Activated CD4-positive, alpha-beta T cell treated with anti-CD3 and anti-CD28 coated beads for 36 hours (primary cell): ENCODE measurements at regions of chr12 and their contacts with region 1.

Region 1: DNA sequence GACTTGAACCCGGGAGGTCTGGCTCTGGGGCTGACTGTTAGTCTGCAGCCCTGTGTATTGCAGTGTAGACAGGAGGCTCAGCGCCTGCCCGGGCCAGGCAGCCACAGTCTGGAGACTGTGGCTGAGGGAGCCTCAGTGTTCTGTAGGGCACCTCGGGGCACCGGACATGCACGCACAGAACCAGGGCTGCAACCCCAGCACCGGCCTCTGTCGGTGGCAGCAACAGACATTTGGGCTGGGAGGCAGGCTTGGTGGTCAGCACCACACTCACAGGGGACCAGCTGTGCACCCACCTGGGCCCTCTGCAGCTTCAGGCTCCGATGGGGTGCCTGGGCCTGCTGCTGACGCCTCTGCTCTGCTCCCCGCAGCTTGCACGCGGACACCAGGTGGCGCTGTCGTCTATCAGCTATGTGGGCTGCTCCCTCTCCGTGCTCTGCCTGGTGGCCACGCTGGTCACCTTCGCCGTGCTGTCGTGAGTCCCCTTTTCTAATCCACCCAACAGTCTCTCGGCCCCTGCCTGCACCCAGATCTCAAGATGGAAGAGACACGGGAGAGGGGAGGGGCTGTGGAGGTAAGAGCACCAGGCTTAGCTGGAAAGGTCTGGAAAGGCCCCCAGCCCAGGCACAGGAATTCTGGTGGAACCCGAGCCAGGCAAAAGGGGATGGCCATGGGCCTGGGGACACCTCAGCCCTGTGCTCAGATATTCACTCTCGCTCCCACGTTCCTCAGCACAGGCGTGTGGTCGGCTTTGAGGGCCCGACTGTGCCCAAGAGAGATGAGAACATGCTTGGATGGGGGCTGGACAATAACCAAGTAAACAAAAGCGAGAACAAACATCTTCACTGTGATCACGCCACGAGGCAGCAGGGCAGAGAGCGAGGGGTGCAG is 151.0 kb downstream of the ADGRD1 start:
- DNase-seq: peak; percentile 94
- ATAC-seq: peak; percentile 80
- H3K4me3 Mint-ChIP-seq: no peak overlapping the region
- H3K27ac Mint-ChIP-seq: no peak overlapping the region
- H3K4me1 Mint-ChIP-seq: peaks cover 22% of the 10 kb centered on the region
- H3K27me3 Mint-ChIP-seq: peaks cover 2% of the 10 kb centered on the region

Region 2: DNA sequence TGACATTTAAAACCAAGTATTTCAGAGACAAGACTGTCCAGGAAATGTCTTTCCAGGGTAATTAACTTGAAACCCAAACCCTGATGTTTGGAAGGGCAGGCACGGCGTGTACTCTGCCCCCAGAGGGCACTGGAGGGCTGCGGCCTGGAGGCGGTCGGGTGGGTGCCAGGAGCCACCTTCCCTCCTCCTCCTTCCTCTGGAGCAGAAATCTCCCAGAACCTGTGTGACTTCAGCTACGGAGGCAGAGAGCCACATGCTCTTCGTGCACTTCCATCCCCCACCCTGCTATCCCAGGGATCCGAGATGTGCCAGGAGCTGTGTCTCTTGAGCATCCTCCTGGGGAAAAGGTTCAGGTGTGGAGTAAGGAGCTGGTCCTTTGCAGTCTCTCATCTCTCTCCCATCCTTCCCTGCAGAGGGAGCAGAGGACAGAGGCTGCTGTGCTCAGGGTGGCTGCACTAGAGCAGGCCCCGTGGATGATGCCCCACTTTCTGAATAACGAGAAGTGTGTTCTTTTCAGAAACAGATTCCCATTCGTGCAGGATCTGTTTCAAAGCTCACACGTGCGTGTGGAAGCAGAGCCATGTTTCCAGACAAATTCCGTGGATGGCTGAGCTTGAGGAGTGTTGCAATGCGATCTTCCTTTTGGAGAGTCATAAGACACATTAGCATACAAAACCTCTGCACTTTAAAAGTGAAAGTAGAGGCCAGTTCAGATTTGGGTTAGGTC is 11.8 kb after region 1 on chr12:
- CTCF ChIA-PET with region 1: interaction called, 11 read pairs
- POLR2A ChIA-PET with region 1: no interaction called
- intact Hi-C with region 1: no loop called
- DNase-seq: peak; percentile 16
- ATAC-seq: no peak
- H3K4me3 Mint-ChIP-seq: no peak overlapping the region
- H3K27ac Mint-ChIP-seq: no peak overlapping the region
- H3K4me1 Mint-ChIP-seq: peaks cover 12% of the 10 kb centered on the region
- H3K27me3 Mint-ChIP-seq: peaks cover 4% of the 10 kb centered on the region

Region 3: GRCh38 chr12:131132118-131132892 is 27.6 kb after region 1 on chr12:
- CTCF ChIA-PET with region 1: interaction called, 102 read pairs
- POLR2A ChIA-PET with region 1: interaction called, 4 read pairs
- intact Hi-C with region 1: loop called (anchors 1 to 2 kb)
- DNase-seq: peak; percentile 89
- ATAC-seq: peak; percentile 92
- H3K4me3 Mint-ChIP-seq: no peak overlapping the region
- H3K27ac Mint-ChIP-seq: no peak overlapping the region
- H3K4me1 Mint-ChIP-seq: no peaks in the 10 kb centered on the region
- H3K27me3 Mint-ChIP-seq: no peaks in the 10 kb centered on the region

Region 4: DNA sequence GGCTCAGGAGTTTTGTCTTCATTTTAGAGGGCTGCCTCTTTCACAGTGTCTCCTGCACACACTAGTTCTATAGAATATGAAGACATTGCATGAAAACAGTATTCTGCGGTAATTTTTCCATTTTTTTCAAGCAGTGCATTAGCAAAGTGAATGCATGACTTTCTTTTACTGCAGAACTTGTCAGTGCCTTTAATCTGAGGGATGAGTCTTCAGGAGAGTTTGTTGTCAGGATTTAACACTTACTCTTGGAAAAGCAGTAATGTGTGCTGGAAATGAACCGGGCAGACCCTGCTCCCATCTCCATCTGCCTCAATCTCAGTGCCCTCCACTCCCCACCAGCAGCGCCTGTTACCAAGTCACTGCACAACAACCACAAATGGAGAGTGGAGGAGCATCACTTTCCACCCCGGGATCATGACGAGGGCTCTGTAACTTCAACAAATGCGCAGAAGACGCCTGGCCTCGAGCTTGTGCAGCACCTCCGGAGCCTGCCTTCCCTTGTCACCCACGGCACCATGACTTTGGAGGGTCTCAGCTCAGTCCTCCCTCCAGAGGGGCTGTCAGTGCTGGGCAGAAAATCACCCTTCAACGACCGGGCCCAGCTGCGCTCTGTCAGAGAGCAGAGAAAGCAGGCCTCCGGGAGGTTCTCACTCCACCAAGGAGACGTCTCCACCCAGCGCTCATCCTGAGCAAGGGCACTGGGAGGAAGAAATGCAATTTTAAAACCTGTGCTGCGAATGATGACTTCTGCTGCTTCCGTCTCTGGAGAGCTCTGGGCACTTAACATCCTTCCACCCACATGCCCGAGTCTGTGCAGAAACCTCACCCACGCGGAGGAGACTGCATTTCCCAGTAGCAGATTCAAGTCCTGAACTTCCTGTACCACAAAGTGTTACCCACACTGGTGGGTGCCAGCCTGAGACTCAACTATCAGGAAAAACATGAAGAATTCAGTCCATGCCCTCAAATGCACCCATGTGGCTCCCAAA is 104.7 kb after region 1 on chr12:
- CTCF ChIA-PET with region 1: interaction called, 9 read pairs
- POLR2A ChIA-PET with region 1: interaction called, 5 read pairs
- intact Hi-C with region 1: loop called (anchors 1 to 10 kb)
- DNase-seq: peak; percentile 60
- ATAC-seq: peak; percentile 69
- H3K4me3 Mint-ChIP-seq: no peak overlapping the region
- H3K27ac Mint-ChIP-seq: peak overlapping the region; percentile 24
- H3K4me1 Mint-ChIP-seq: peaks cover 35% of the 10 kb centered on the region
- H3K27me3 Mint-ChIP-seq: peaks cover 2% of the 10 kb centered on the region

Region 5: DNA sequence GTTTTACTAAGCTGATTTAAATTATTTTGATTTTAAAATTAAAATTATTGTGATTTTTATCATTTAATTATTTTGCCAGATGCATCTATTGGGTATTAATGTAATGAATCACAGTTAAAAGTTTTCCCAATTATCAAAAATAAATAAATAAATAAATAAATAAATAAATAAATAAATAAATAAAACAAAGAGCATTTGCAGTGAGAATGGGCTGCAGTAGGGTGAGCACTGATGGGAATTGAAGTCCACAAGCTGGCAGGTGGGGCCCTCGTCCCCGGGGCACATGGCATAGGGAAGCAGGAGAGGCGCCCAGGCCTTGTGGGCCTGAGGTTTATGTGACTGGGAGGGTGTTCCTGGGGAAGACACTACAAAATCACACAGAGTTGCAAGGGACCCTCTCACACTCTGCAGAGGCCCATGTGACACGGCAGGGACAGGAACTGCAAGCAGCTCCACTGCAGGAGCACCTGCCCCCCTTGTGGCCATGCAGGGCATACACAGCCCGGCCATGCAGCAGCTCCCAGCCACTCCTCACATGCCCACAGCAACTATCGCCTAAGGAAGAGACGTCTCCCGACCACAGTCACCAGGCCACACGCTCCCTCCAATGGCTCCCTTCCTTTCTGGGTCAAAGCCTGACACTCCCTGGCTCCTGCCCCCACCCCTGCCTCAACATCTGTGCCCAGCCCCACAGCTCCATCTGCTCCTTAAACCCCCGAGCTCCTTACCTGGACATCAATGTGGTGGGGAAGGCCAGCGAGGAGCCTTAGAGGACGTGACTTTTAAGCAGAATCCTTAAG is 349.9 kb after region 1 on chr12:
- CTCF ChIA-PET with region 1: interaction called, 18 read pairs
- POLR2A ChIA-PET with region 1: no interaction called
- intact Hi-C with region 1: loop called (anchors 1 to 5 kb)
- DNase-seq: peak; percentile 81
- ATAC-seq: peak; percentile 99
- H3K4me3 Mint-ChIP-seq: no peak overlapping the region
- H3K27ac Mint-ChIP-seq: no peak overlapping the region
- H3K4me1 Mint-ChIP-seq: peaks cover 2% of the 10 kb centered on the region
- H3K27me3 Mint-ChIP-seq: peaks cover 5% of the 10 kb centered on the region